A549 (cell line): ENCODE measurements at regions of chr3 and their contacts with region 1.

Region 1: DNA sequence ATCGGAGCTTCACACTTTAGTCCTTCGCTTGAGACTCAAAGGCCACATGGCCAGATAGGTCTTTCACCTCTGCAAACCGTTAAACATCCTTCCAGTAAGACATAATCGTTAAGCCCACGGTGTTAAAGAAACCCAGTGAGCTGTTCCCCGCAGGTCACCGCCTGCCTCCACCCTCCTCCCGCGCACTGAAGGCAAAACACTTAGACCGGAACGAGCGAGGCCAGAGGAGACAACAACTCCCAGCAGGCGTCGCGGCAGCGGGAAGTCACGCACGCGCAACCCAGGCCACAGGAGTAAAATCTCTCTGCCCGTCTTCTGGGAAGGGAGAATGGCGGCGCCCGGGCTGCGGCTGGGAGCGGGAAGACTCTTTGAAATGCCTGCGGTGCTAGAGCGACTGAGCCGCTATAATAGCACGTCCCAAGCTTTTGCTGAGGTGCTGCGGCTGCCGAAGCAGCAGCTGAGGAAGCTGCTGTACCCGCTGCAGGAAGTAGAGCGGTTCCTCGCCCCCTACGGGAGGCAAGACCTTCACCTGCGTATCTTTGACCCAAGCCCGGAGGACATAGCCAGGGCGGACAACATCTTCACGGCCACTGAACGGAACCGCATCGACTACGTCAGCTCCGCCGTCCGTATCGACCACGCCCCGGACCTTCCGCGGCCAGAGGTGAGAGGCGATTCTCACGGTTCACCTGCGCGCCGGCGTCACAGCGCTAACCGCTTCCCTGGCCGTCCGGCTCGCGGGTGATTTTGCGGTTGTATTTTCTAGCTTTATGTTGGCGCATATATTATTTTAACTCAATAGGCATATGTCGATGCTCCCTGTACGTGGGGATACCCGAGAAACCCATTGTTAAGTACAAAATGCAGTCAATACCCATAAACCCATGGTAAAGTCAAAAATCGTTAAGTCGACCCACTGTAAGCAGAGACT is at the start of gene GTPBP8:
- DNase-seq: peak; percentile 84 to 95
- ATAC-seq: peak; percentile 98 to 99
- H3K4me3 ChIP-seq: peak within 1 kb of the TSS; percentile 88
- H3K27ac ChIP-seq: peak within 1 kb of the TSS; percentile 90 to 94
- H3K4me1 ChIP-seq: peaks cover 18% of the 10 kb centered on the region
- CTCF ChIP-seq: no peak
- EP300 ChIP-seq: no peak
- POLR2A ChIP-seq: peak; percentile 61
- RAD21 ChIP-seq: peak; percentile 2 to 27; a peak in 1 of 5 replicates
- polyA plus RNA-seq, gene GTPBP8: 25.9 and 26.6 TPM in 2 replicates

Region 2: DNA sequence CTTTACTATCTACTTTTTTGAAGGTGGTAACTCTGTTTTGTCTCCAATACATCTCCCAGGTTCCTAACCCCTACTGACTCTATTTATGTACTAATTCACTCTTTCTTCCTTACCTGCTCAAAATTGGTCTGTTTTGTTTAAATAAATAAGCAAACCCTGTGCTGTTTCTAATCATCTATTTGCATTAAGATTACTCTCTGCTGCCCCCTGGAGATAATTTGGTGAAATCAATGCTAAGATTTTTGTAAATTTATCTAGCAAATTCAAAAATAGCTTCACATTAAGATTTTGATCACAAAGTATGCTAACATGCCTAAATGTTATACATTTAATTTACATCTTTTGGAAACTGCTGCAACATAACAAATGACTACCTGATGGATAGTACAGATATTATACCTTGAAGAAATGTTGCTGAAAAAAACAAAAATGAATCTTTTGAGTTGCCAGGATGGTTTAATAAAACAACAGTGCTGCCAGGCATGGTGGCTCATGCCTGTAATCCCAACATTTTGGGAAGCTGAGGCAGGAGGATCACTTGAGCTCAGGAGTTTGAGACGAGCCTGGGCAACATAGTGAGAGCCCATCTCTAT is 11.6 kb before region 1 on chr3:
- CTCF ChIA-PET with region 1: interaction called, 23 read pairs
- POLR2A ChIA-PET with region 1: no interaction called
- DNase-seq: peak; percentile 21 to 42
- ATAC-seq: no peak
- H3K4me3 ChIP-seq: no peak overlapping the region
- H3K27ac ChIP-seq: peak overlapping the region; percentile 2 to 25; a peak in 3 of 6 replicates
- H3K4me1 ChIP-seq: peaks cover 8% of the 10 kb centered on the region; the same call in 1 of the 3 replicates
- CTCF ChIP-seq: peak; percentile 83
- EP300 ChIP-seq: no peak
- POLR2A ChIP-seq: no peak
- RAD21 ChIP-seq: peak; percentile 74 to 83

Region 3: GRCh38 chr3:113019182-113020137 is 28.5 kb after region 1 on chr3:
- CTCF ChIA-PET with region 1: no interaction called
- POLR2A ChIA-PET with region 1: interaction called, 11 read pairs
- DNase-seq: peak; percentile 91 to 94
- ATAC-seq: peak; percentile 99
- H3K4me3 ChIP-seq: peak overlapping the region; percentile 90
- H3K27ac ChIP-seq: peak overlapping the region; percentile 97 to 98
- H3K4me1 ChIP-seq: peaks cover 13% of the 10 kb centered on the region
- CTCF ChIP-seq: no peak
- EP300 ChIP-seq: no peak
- POLR2A ChIP-seq: 0 out of 2 replicates have a peak, but pooled peaks have one; percentile 51
- RAD21 ChIP-seq: no peak